ENCODE measurements at regions of chr4 and their contacts with region 1.

Region 1: DNA sequence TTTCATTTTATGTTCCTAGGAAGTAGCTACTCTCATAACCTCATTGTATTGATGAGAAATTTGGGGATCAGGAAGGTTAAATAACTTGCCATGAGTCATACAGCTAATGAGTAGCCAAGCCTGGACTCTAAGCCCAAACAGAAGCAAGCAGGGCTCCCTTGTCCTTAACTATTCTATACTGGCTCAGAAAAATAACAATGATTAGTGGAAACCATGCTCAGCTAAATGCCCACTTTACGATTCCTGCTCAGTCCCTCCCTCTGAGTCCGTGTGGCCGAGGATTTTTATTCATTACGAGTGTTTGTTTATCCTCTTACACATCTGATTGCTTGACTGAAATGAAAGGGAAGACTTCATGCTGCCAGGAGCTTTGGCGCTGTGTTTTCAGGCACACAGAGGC is 100.9 kb downstream of the SLC34A2 start:
- DNase-seq: peak; percentile 23
- H3K4me3 Mint-ChIP-seq: no peak overlapping the region
- H3K27ac Mint-ChIP-seq: peak overlapping the region; percentile 13
- H3K4me1 Mint-ChIP-seq: peaks cover 24% of the 10 kb centered on the region
- H3K27me3 Mint-ChIP-seq: no peaks in the 10 kb centered on the region
- CTCF ChIP-seq: no peak

Region 2: GRCh38 chr4:25523405-25523804 is 233.1 kb before region 1 on chr4:
- CTCF ChIA-PET with region 1: no interaction called
- intact Hi-C with region 1: loop called (anchors 5 kb)
- DNase-seq: peak; percentile 50
- H3K4me3 Mint-ChIP-seq: no peak overlapping the region
- H3K27ac Mint-ChIP-seq: no peak overlapping the region
- H3K4me1 Mint-ChIP-seq: peaks cover 12% of the 10 kb centered on the region
- H3K27me3 Mint-ChIP-seq: no peaks in the 10 kb centered on the region
- CTCF ChIP-seq: no peak

Region 3: GRCh38 chr4:25727711-25728493 is 28.6 kb before region 1 on chr4:
- CTCF ChIA-PET with region 1: no interaction called
- intact Hi-C with region 1: no loop called
- DNase-seq: no peak
- H3K4me3 Mint-ChIP-seq: no peak overlapping the region
- H3K27ac Mint-ChIP-seq: no peak overlapping the region
- H3K4me1 Mint-ChIP-seq: no peaks in the 10 kb centered on the region
- H3K27me3 Mint-ChIP-seq: no peaks in the 10 kb centered on the region
- CTCF ChIP-seq: no peak

Measured in Calu3 (cell line).